Naive thymus-derived CD4-positive, alpha-beta T cell (primary cell): ENCODE measurements at regions of chr18 and their contacts with region 1.

Region 1: DNA sequence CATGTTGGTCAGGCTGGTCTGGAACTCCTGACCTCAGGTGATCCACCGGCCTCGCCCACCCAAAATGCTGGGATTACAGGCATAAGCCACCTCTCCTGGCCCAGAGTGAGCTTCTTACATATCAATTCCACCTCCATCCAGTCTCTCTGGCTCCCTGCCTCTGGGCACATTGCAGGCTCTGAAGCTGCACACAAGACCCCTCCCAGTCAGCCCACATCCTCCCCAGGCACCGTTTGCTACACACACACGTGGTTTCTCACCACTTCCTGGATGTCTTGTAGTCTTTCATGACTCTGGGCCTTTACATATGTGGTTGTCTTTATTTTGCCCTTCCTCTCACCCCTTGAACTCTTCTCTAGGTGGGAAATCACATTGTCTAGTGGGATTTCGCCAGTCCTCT is 64.0 kb upstream of the CABLES1 start:
- DNase-seq: peak; percentile 49 to 94 (median 92)
- ATAC-seq: peak; percentile 99
- H3K4me3 ChIP-seq: peak overlapping the region; percentile 12
- H3K4me3 Mint-ChIP-seq: peak overlapping the region; percentile 73 to 91 (median 78)
- H3K27ac ChIP-seq: peak overlapping the region; percentile 18
- H3K27ac Mint-ChIP-seq: peak overlapping the region; percentile 69 to 94 (median 91)
- H3K4me1 ChIP-seq: peaks cover 44 to 50% of the 10 kb centered on the region in 2 donors
- H3K4me1 Mint-ChIP-seq: peaks cover 46 to 83% (median 77%) of the 10 kb centered on the region in 7 donors
- H3K27me3 ChIP-seq: no peaks in the 10 kb centered on the region
- H3K27me3 Mint-ChIP-seq: peaks cover 0 to 3% (median 0%) of the 10 kb centered on the region in 5 donors

Region 2: GRCh38 chr18:22872900-22873551 is 198.3 kb before region 1 on chr18:
- CTCF ChIA-PET with region 1: no interaction called
- POLR2A ChIA-PET with region 1: no interaction called
- intact Hi-C with region 1: no loop called
- DNase-seq: no peak
- ATAC-seq: no peak
- H3K4me3 ChIP-seq: no peak overlapping the region
- H3K4me3 Mint-ChIP-seq: peak overlapping the region in 7 of 10 donors; percentile 0 to 43 (median 15)
- H3K27ac ChIP-seq: no peak overlapping the region
- H3K27ac Mint-ChIP-seq: peak overlapping the region in 2 of 9 donors; percentile 5 to 77
- H3K4me1 ChIP-seq: no peaks in the 10 kb centered on the region
- H3K4me1 Mint-ChIP-seq: peaks cover 0 to 18% (median 13%) of the 10 kb centered on the region in 7 donors
- H3K27me3 ChIP-seq: no peaks in the 10 kb centered on the region
- H3K27me3 Mint-ChIP-seq: peaks cover 4 to 13% (median 11%) of the 10 kb centered on the region in 5 donors

Region 3: DNA sequence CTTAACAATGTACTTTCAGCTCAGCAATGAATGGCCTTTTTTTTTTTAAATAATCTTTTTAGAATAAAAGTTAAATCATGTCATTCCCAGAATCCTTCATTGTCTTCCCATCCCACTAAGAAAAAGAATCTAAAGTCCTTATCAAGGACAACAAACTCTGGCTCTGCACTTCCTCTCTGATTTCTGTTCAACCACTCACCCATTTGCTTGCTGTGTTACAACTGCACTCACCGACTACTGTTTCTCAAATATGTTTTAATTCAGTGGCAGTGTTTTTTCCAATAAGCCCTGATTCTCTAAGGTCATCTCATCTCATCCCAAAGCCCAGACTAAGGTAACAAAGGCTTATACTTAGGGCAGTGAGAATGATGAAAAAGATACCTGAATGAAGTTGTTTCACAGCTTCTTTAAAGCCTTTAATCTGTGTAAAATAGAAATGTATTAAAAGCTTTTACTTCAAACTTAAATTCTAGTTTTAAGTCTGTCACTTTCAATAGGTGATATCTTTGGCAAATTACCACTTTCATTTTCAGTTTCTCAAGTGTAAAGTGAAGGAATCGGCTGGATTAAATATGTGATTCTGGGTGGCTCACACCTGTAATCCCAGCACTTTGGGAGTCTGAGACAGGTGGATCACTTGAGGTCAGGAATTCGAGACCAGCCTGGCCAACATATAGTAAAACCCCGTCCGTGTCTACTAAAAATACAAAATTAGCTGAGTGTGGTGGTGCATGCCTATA is 50.6 kb before region 1 on chr18:
- CTCF ChIA-PET with region 1: no interaction called
- POLR2A ChIA-PET with region 1: no interaction called
- intact Hi-C with region 1: loop called in 1 of 2 experiments (anchors 5 kb)
- DNase-seq: peak in 1 of 9 donors; percentile 2
- ATAC-seq: no peak
- H3K4me3 ChIP-seq: peak overlapping the region; percentile 43
- H3K4me3 Mint-ChIP-seq: peak overlapping the region in 9 of 10 donors; percentile 1 to 82 (median 65)
- H3K27ac ChIP-seq: peak overlapping the region; percentile 45
- H3K27ac Mint-ChIP-seq: peak overlapping the region in 7 of 9 donors; percentile 39 to 80 (median 53)
- H3K4me1 ChIP-seq: peaks cover 5 to 9% of the 10 kb centered on the region in 2 donors
- H3K4me1 Mint-ChIP-seq: peaks cover 0 to 17% (median 10%) of the 10 kb centered on the region in 7 donors
- H3K27me3 ChIP-seq: no peaks in the 10 kb centered on the region
- H3K27me3 Mint-ChIP-seq: no peaks in the 10 kb centered on the region

Region 4: DNA sequence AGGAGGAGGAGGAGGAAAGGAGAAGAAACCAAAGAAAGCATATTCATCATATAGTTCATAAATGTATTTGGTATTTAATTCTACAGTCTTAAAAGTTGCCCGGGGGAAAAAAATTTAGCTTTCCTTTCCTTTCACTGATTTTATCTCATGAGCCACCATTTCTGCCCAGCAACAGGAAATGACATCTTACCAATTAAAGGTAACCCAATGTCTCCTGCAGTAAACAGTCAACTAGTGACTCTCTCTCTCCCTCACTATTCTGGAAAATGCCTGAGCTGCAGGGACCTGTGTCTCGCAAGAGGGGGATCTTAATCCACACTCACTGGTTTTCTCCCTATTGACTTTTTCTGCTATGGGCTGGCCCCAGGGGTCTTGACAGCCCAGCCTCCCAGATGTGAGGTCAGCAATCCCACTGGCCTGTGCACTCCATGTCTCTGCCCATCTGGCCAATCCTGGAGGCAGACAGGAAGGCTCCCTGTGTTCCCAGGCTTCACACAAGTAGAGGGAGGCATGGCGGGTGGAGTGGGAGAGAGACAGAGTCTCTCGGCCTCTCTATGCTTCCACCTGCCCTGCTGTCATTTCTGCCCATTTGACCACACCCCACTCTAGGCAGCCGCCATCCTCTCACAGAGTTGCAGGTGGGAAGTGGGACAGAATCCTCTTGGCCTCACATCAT is 21.4 kb before region 1 on chr18:
- CTCF ChIA-PET with region 1: no interaction called
- POLR2A ChIA-PET with region 1: interaction called, 4 read pairs
- intact Hi-C with region 1: loop called (anchors 1 kb)
- DNase-seq: peak in 7 of 9 donors; percentile 32 to 57 (median 44)
- ATAC-seq: peak; percentile 42
- H3K4me3 ChIP-seq: peak overlapping the region; percentile 21
- H3K4me3 Mint-ChIP-seq: peak overlapping the region; percentile 1 to 64 (median 43)
- H3K27ac ChIP-seq: no peak overlapping the region
- H3K27ac Mint-ChIP-seq: peak overlapping the region; percentile 49 to 86 (median 73)
- H3K4me1 ChIP-seq: peaks cover 12 to 17% of the 10 kb centered on the region in 2 donors
- H3K4me1 Mint-ChIP-seq: peaks cover 13 to 35% (median 25%) of the 10 kb centered on the region in 7 donors
- H3K27me3 ChIP-seq: no peaks in the 10 kb centered on the region
- H3K27me3 Mint-ChIP-seq: peaks cover 0 to 11% (median 0%) of the 10 kb centered on the region in 5 donors

Region 5: GRCh38 chr18:23356915-23357601 is 285.8 kb after region 1 on chr18:
- CTCF ChIA-PET with region 1: no interaction called
- POLR2A ChIA-PET with region 1: no interaction called
- intact Hi-C with region 1: loop called (anchors 2 kb)
- DNase-seq: no peak
- ATAC-seq: no peak
- H3K4me3 ChIP-seq: no peak overlapping the region
- H3K4me3 Mint-ChIP-seq: no peak overlapping the region
- H3K27ac ChIP-seq: no peak overlapping the region
- H3K27ac Mint-ChIP-seq: no peak overlapping the region
- H3K4me1 ChIP-seq: peaks cover 0 to 7% of the 10 kb centered on the region in 2 donors
- H3K4me1 Mint-ChIP-seq: peaks cover 5 to 21% (median 12%) of the 10 kb centered on the region in 7 donors
- H3K27me3 ChIP-seq: no peaks in the 10 kb centered on the region
- H3K27me3 Mint-ChIP-seq: no peaks in the 10 kb centered on the region

Region 6: DNA sequence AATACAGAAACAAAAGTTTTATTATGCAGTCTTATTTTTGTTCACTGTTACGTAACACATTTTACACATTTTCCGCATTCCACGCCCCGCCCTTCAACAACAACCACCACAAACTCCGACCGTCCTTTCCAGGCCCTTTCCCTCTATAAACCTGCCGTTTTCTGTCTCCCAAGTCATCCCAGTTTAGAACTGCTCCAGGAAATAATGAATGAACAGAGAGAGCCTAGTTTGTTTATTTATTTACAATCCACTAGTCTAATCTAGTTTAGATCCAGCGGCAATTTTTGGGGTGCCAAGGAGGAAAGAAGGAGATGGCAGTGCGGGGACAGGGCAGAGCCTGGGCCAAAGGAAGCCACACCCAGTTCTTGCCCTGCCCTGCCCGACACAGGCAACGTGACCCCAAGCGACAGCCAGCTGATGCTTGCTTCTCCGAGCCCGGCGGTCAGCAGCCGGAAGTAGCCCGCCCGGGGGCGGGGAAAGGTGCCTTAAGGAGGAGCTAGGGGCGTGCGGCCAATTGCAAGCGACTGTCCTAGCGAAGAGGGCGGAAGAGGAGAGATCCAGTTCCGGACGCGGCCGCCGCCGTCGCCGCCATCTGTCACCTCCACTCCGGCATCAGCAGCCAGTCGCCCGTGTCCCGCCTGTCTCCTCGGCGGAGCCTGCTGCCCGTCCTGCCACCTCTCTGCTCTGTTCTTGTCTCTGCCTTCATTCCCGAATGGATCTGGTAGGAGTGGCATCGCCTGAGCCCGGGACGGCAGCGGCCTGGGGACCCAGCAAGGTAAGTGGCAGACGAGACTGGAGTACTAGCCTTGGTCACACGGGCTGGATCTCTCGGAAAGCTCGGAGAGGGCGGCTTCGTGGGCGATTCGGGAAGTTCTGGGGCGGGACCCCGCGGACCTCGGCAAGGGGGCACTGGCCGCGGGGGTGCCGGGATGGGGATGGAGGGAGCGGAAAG is 381.7 kb after region 1 on chr18 and contains the start of gene RIOK3:
- CTCF ChIA-PET with region 1: no interaction called
- POLR2A ChIA-PET with region 1: no interaction called
- intact Hi-C with region 1: loop called in 1 of 2 experiments (anchors 2 kb)
- DNase-seq: peak; percentile 68 to 96 (median 74)
- ATAC-seq: peak; percentile 97
- H3K4me3 ChIP-seq: peak within 1 kb of the TSS; percentile 82
- H3K4me3 Mint-ChIP-seq: peak within 1 kb of the TSS; percentile 92 to 100 (median 98)
- H3K27ac ChIP-seq: peak within 1 kb of the TSS; percentile 90
- H3K27ac Mint-ChIP-seq: peak within 1 kb of the TSS; percentile 91 to 99 (median 96)
- H3K4me1 ChIP-seq: peaks cover 13 to 25% of the 10 kb centered on the region in 2 donors
- H3K4me1 Mint-ChIP-seq: peaks cover 22 to 55% (median 47%) of the 10 kb centered on the region in 7 donors
- H3K27me3 ChIP-seq: no peaks in the 10 kb centered on the region
- H3K27me3 Mint-ChIP-seq: peaks cover 0 to 7% (median 0%) of the 10 kb centered on the region in 5 donors
- total RNA-seq, gene RIOK3: 74.0 to 153 (median 78.2) TPM